IMR-90 (cell line): ENCODE measurements at regions of chr11 and their contacts with region 1.

Region 1: DNA sequence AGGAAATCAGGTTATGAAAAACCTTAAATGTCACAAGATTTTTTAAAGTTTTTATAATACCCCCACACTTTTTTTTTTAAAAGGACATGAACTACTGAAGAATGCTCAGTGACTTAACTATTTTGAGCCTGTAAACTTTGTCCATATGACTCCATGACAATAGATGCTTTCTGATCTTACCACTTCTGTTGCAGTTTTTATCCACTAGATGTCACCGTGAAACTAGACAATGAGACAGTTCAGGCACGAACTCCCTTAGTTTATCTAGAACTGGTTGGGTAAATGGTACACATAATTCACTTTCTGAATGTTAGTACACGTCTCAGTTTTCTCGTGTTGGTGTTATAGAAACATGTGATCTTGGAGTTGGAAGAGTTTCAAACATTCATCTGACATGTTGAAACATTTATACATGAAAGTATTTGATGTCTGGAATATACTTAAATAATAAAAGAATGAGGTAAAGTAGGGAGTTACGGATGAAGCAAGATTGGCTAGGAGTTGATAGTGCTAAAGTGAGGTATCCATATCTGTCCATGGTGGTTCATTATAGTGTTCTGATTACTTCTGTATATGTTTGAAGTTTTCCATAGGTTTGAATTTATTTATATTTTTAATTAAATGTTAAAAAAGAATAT is 8.1 kb downstream of the CCDC15 start:
- DNase-seq: peak; percentile 85
- ATAC-seq: peak; percentile 100
- H3K4me3 ChIP-seq: no peak overlapping the region
- H3K27ac ChIP-seq: no peak overlapping the region
- H3K4me1 ChIP-seq: no peaks in the 10 kb centered on the region
- H3K27me3 ChIP-seq: no peaks in the 10 kb centered on the region
- CTCF ChIP-seq: peak; percentile 91
- POLR2A ChIP-seq: peak; percentile 43; the same call in 1 of the 2 replicates
- RAD21 ChIP-seq: peak; percentile 95

Region 2: DNA sequence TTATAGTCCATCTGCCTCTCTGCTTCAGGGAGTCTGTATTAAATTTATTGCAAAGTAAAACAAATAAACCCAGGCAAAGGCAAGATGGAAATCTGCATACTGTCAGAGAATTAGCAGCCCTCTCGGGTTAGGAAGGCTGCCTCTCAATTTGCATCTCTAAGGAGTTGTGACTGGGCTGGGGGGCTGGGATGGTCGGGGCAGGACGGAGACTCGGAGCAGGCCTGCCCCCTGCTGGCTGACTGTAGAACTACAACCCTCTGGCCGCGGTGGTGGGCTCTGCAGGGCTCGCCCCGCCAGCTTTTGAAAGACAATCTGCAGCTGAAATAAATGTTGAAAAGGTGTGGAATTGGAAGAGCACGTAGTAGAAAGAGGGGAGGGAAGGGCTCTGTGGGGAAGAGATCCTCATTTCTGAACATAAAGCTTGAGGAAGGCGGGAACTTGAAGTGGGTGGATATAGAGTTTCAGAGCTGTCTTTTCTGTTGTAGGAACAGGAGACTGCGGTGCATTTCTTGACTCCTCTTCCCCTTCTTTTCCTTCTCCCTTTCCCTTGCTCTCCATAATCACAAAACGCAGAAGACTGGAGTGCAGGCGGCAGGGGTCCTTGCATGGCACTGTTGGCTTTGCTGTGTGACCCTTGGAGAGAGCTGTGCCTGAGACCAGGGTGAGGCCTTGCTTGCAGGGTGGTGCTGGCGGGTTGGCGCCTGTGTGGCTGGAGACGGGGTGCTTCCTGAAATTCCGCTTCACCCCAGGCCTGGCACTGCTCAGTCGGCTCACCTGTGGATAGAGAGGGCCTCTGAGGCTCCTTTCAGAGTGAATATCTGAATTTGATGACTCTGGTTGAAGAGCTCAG is 179.8 kb after region 1 on chr11:
- CTCF ChIA-PET with region 1: interaction called, 3 read pairs
- POLR2A ChIA-PET with region 1: no interaction called
- dilution Hi-C with region 1: no loop called
- in situ Hi-C with region 1: no loop called
- intact Hi-C with region 1: loop called (anchors 1 kb)
- DNase-seq: peak; percentile 29
- ATAC-seq: peak; percentile 100
- H3K4me3 ChIP-seq: no peak overlapping the region
- H3K27ac ChIP-seq: no peak overlapping the region
- H3K4me1 ChIP-seq: no peaks in the 10 kb centered on the region; the same call in 1 of the 2 replicates
- H3K27me3 ChIP-seq: peaks cover 13% of the 10 kb centered on the region
- CTCF ChIP-seq: peak; percentile 83
- POLR2A ChIP-seq: 0 out of 2 replicates have a peak, but pooled peaks have one; percentile 29
- RAD21 ChIP-seq: peak; percentile 82

Region 3: GRCh38 chr11:125224391-125225010 is 262.4 kb after region 1 on chr11:
- CTCF ChIA-PET with region 1: no interaction called
- POLR2A ChIA-PET with region 1: no interaction called
- dilution Hi-C with region 1: no loop called
- in situ Hi-C with region 1: no loop called
- intact Hi-C with region 1: loop called (anchors 5 kb)
- DNase-seq: peak; percentile 23
- ATAC-seq: peak; percentile 81
- H3K4me3 ChIP-seq: no peak overlapping the region
- H3K27ac ChIP-seq: no peak overlapping the region
- H3K4me1 ChIP-seq: no peaks in the 10 kb centered on the region
- H3K27me3 ChIP-seq: peaks cover 2% of the 10 kb centered on the region; the same call in 1 of the 2 replicates
- CTCF ChIP-seq: peak; percentile 36
- POLR2A ChIP-seq: no peak
- RAD21 ChIP-seq: peak; percentile 38; the same call in 1 of the 2 replicates

Region 4: GRCh38 chr11:125345421-125346178 is 383.5 kb after region 1 on chr11:
- CTCF ChIA-PET with region 1: no interaction called
- POLR2A ChIA-PET with region 1: no interaction called
- dilution Hi-C with region 1: no loop called
- in situ Hi-C with region 1: no loop called
- intact Hi-C with region 1: loop called (anchors 1 kb)
- DNase-seq: peak; percentile 67
- ATAC-seq: peak; percentile 82
- H3K4me3 ChIP-seq: no peak overlapping the region
- H3K27ac ChIP-seq: no peak overlapping the region
- H3K4me1 ChIP-seq: peaks cover 2% of the 10 kb centered on the region; the same call in 1 of the 2 replicates
- H3K27me3 ChIP-seq: no peaks in the 10 kb centered on the region
- CTCF ChIP-seq: peak; percentile 89
- POLR2A ChIP-seq: no peak
- RAD21 ChIP-seq: peak; percentile 78

Region 5: DNA sequence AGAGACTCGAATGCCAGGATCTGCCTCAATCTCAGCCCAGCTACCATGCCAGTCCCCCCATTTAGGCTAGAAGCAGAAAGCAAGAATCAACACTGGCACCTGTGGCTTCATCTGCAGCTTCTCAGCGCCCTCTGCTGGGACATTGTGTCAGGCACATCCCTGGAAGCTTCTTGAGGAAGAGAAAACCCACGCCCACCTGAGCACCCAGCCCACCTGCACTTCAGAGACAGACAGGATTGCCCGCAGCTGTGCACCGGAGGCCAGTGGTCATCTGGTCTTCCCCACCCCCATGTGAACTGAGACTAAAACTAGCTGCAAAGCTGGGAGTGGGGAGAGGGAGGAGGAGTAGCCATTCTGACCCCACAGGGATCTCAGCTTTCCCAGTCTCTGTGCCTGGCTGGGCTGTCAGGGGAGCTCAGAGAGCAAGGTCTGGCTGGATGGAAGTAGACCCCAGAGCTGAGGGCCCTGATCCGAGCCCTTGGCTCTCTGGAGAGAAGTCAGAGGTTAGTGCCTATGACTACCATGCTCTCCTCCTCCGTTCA is 467.1 kb after region 1 on chr11:
- CTCF ChIA-PET with region 1: interaction called, 3 read pairs
- POLR2A ChIA-PET with region 1: no interaction called
- dilution Hi-C with region 1: no loop called
- in situ Hi-C with region 1: no loop called
- intact Hi-C with region 1: loop called (anchors 1 kb)
- DNase-seq: peak; percentile 55
- ATAC-seq: peak; percentile 78
- H3K4me3 ChIP-seq: no peak overlapping the region
- H3K27ac ChIP-seq: no peak overlapping the region
- H3K4me1 ChIP-seq: no peaks in the 10 kb centered on the region
- H3K27me3 ChIP-seq: peaks cover 10% of the 10 kb centered on the region
- CTCF ChIP-seq: peak; percentile 74
- POLR2A ChIP-seq: no peak
- RAD21 ChIP-seq: peak; percentile 75

Region 6: GRCh38 chr11:125568970-125569914 is 607.2 kb after region 1 on chr11 and contains the start of gene EI24:
- CTCF ChIA-PET with region 1: interaction called, 3 read pairs
- POLR2A ChIA-PET with region 1: no interaction called
- dilution Hi-C with region 1: no loop called
- in situ Hi-C with region 1: no loop called
- intact Hi-C with region 1: loop called (anchors 10 kb)
- DNase-seq: peak; percentile 90
- ATAC-seq: peak; percentile 98
- H3K4me3 ChIP-seq: peak within 1 kb of the TSS; percentile 99
- H3K27ac ChIP-seq: peak within 1 kb of the TSS; percentile 76
- H3K4me1 ChIP-seq: peaks cover 12% of the 10 kb centered on the region
- H3K27me3 ChIP-seq: no peaks in the 10 kb centered on the region; the same call in 1 of the 2 replicates
- CTCF ChIP-seq: peak; percentile 70
- POLR2A ChIP-seq: peak; percentile 71
- RAD21 ChIP-seq: peak; percentile 48
- total RNA-seq, gene EI24: 95.9 and 122 TPM in 2 replicates